Activated CD4-positive, alpha-beta memory T cell treated with anti-CD3 and anti-CD28 coated beads, Interleukin-2, amount 10 ng/mL, durations not matched to agents 7 days and 5 days (primary cell): ENCODE measurements at regions of chr12 and their contacts with region 1.

Region 1: GRCh38 chr12:71780237-71780822 is 25.7 kb downstream of the RAB21 start:
- DNase-seq: peak; percentile 48
- H3K4me3 Mint-ChIP-seq: no peak overlapping the region
- H3K27ac Mint-ChIP-seq: peak overlapping the region; percentile 2
- H3K4me1 Mint-ChIP-seq: peaks cover 5% of the 10 kb centered on the region
- H3K27me3 Mint-ChIP-seq: no peaks in the 10 kb centered on the region

Region 2: DNA sequence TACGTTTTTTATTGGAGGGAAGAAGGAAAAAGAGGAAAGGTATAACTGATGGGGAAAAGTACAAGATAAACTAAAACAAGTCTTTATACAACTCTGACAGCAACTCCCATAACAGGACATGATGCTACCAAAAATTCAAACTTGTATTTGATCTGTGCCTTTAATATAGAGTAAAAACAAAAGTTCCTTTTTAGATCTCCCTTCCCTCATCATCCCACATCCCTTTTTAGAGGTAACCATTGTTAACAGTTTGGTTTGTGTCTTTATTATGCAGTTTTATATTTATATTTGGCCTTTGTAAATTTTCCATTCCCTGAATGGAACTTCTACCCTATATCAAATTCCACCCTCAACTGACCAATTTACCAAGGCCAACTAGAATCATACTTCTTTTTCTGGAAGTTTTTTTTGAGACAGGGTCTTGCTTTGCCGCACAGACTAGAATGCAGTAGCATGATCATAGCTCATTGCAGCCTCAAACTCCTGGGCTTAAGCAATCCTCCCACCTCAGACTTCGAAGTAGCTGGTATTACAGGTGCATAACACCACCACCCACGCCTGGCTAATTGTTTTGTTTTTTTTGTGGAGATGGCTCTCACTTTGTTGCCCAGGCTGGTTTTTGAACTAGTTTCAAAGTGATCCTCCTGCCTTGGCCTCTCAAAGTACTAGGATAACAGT is 11.3 kb after region 1 on chr12:
- CTCF ChIA-PET with region 1: interaction called, 12 read pairs
- POLR2A ChIA-PET with region 1: interaction called, 3 read pairs
- DNase-seq: no peak
- H3K4me3 Mint-ChIP-seq: no peak overlapping the region
- H3K27ac Mint-ChIP-seq: no peak overlapping the region
- H3K4me1 Mint-ChIP-seq: peaks cover 5% of the 10 kb centered on the region
- H3K27me3 Mint-ChIP-seq: no peaks in the 10 kb centered on the region

Region 3: GRCh38 chr12:71840231-71840847 is 60.0 kb after region 1 on chr12:
- CTCF ChIA-PET with region 1: interaction called, 33 read pairs
- POLR2A ChIA-PET with region 1: interaction called, 3 read pairs
- DNase-seq: peak; percentile 22
- H3K4me3 Mint-ChIP-seq: peak overlapping the region; percentile 92
- H3K27ac Mint-ChIP-seq: peak overlapping the region; percentile 97
- H3K4me1 Mint-ChIP-seq: peaks cover 37% of the 10 kb centered on the region
- H3K27me3 Mint-ChIP-seq: no peaks in the 10 kb centered on the region

Region 4: GRCh38 chr12:71846322-71846940 is 66.1 kb after region 1 on chr12:
- CTCF ChIA-PET with region 1: interaction called, 33 read pairs
- POLR2A ChIA-PET with region 1: interaction called, 3 read pairs
- DNase-seq: no peak
- H3K4me3 Mint-ChIP-seq: no peak overlapping the region
- H3K27ac Mint-ChIP-seq: no peak overlapping the region
- H3K4me1 Mint-ChIP-seq: peaks cover 19% of the 10 kb centered on the region
- H3K27me3 Mint-ChIP-seq: no peaks in the 10 kb centered on the region

Region 5: GRCh38 chr12:71958993-71959578 is 178.8 kb after region 1 on chr12:
- CTCF ChIA-PET with region 1: no interaction called
- POLR2A ChIA-PET with region 1: no interaction called
- DNase-seq: no peak
- H3K4me3 Mint-ChIP-seq: no peak overlapping the region
- H3K27ac Mint-ChIP-seq: no peak overlapping the region
- H3K4me1 Mint-ChIP-seq: no peaks in the 10 kb centered on the region
- H3K27me3 Mint-ChIP-seq: peaks cover 7% of the 10 kb centered on the region

Region 6: GRCh38 chr12:72264548-72265175 is 484.3 kb after region 1 on chr12:
- CTCF ChIA-PET with region 1: no interaction called
- POLR2A ChIA-PET with region 1: no interaction called
- DNase-seq: no peak
- H3K4me3 Mint-ChIP-seq: no peak overlapping the region
- H3K27ac Mint-ChIP-seq: no peak overlapping the region
- H3K4me1 Mint-ChIP-seq: no peaks in the 10 kb centered on the region
- H3K27me3 Mint-ChIP-seq: peaks cover 4% of the 10 kb centered on the region